Activated naive CD4-positive, alpha-beta T cell treated with anti-CD3 and anti-CD28 coated beads, Interleukin-2, amount 10 ng/mL, durations not matched to agents 7 days and 5 days (primary cell): ENCODE measurements at regions of chr1 and their contacts with region 1.

Region 1: DNA sequence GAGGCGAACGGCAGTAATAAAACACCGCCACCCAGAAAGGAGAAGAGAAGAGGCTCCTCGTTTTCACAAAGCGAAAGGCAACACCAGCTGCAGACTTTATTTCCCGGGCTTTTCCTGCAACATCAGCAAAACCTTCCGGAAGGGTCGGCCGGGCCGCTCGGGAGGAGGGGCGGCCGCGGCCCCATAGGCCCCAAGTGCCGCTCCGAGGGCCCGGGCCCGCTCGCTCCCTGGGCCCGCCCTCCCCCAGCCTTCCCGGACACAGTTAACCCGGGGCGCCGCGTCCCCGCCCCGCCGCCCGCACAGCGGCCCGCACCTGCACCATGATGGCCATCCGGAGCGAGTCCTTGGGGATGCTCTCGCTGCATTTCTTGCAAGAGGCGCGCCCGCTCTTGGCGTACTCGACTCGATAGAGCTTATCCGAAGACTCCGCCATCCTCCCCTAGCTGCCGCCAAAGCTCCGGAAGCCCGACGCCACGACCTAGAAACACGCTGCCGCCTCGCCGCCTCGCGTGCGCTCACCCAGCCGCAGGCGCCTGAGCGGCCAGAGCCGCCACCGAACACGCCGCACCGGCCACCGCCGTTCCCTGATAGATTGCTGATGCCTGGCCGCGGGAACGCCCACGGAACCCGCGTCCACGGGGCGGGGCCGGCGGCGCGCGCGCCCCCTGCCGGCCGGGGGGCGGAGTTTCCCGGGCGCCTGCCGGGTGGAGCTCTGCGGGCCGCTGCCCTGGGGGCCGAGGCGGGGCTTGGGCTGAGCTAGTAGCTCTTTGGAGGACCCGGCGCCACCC is at the start of gene PARP1:
- DNase-seq: peak; percentile 91
- H3K4me3 Mint-ChIP-seq: peak within 1 kb of the TSS; percentile 97
- H3K27ac Mint-ChIP-seq: peak within 1 kb of the TSS; percentile 97
- H3K4me1 Mint-ChIP-seq: peaks cover 40% of the 10 kb centered on the region
- H3K27me3 Mint-ChIP-seq: peaks cover 10% of the 10 kb centered on the region

Region 2: GRCh38 chr1:226444901-226445300 is 37.2 kb after region 1 on chr1:
- CTCF ChIA-PET with region 1: interaction called, 15 read pairs
- DNase-seq: peak; percentile 87
- H3K4me3 Mint-ChIP-seq: no peak overlapping the region
- H3K27ac Mint-ChIP-seq: peak overlapping the region; percentile 79
- H3K4me1 Mint-ChIP-seq: peaks cover 32% of the 10 kb centered on the region
- H3K27me3 Mint-ChIP-seq: peaks cover 34% of the 10 kb centered on the region

Region 3: GRCh38 chr1:226498640-226499008 is 90.9 kb after region 1 on chr1:
- CTCF ChIA-PET with region 1: no interaction called
- DNase-seq: no peak
- H3K4me3 Mint-ChIP-seq: no peak overlapping the region
- H3K27ac Mint-ChIP-seq: no peak overlapping the region
- H3K4me1 Mint-ChIP-seq: no peaks in the 10 kb centered on the region
- H3K27me3 Mint-ChIP-seq: peaks cover 28% of the 10 kb centered on the region